ENCODE measurements at regions of chr14 and their contacts with region 1.

Region 1: DNA sequence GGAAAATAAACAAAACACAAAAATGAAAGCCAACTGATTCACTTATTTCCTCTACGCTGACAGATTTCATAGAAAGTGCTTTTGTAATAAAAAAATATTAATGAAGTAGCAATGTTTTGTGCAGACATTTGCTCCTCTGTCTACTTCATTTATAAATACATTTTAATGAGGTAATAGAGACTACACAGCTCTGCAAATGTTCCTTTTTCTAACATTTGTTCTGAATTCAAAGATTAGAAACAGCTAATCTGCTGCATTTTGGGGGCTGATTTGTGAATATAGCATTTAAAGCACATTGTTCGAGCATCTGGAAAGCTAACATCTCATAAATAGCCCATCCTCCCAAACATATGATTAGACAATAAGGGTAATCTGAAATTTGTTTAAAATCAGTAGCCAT is 97.8 kb downstream of the PRKD1 start:
- DNase-seq: no peak
- ATAC-seq: no peak
- H3K4me3 Mint-ChIP-seq: no peak overlapping the region
- H3K27ac Mint-ChIP-seq: no peak overlapping the region
- H3K4me1 Mint-ChIP-seq: no peaks in the 10 kb centered on the region
- H3K27me3 Mint-ChIP-seq: no peaks in the 10 kb centered on the region

Region 2: DNA sequence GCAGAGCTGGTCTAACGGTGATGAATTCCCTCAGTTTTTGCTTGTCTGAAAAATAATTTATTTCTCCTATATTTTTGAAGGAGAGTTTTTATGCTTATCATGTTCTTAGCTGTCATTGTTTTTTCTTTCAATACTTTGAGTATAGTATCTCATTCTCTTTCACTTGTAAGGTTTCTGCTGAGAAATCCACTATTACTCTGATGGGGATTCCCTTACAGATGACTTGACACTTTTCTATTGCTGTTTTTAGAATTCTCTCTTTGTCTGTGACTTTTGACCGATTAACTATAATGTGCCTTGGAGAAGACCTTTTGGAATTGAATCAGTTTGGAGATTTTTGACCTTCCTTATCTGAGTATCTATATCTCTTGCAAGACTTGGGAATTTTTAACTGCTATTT is 41.8 kb before region 1 on chr14:
- CTCF ChIA-PET with region 1: no interaction called
- POLR2A ChIA-PET with region 1: no interaction called
- intact Hi-C with region 1: no loop called
- DNase-seq: no peak
- ATAC-seq: no peak
- H3K4me3 Mint-ChIP-seq: no peak overlapping the region
- H3K27ac Mint-ChIP-seq: no peak overlapping the region
- H3K4me1 Mint-ChIP-seq: no peaks in the 10 kb centered on the region
- H3K27me3 Mint-ChIP-seq: no peaks in the 10 kb centered on the region

Region 3: DNA sequence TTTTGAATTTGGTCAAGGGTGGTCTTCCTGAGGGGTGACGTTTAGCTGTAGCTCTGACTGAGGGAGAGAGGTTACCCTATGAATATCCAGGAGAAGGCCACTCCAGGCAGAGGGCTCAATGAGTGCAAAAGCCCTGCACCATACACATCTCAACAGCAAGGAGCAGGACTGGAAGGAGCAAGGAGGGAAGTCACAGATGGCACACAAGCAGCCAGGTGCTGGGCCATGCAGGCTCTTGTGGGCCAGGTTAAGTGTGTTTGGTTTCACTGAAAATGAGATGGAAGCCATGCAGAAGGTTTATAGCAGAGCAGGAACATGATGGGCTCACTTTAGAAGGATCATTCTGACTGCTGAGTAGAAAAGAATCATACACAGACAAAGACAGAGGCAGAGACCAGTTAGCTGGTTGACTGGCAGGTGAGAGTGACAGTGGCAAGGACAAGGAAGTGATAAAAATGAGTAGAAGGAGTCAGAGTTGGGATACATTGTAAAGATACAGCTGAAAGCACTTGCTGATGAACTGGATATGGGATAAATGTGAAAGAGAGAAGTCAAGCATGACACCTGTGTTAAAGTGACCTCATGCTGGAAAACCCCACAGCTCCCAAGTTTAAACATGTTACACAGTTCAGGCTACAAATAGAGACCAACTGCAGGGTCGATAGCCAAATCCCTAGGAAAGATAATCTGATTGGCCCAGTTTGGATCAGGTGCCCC is 16.6 kb after region 1 on chr14:
- CTCF ChIA-PET with region 1: no interaction called
- POLR2A ChIA-PET with region 1: interaction called, 10 read pairs
- intact Hi-C with region 1: no loop called
- DNase-seq: no peak
- ATAC-seq: no peak
- H3K4me3 Mint-ChIP-seq: no peak overlapping the region
- H3K27ac Mint-ChIP-seq: no peak overlapping the region
- H3K4me1 Mint-ChIP-seq: no peaks in the 10 kb centered on the region
- H3K27me3 Mint-ChIP-seq: no peaks in the 10 kb centered on the region